WTC11 (cell line): ENCODE measurements at regions of chr22 and their contacts with region 1.

Region 1: DNA sequence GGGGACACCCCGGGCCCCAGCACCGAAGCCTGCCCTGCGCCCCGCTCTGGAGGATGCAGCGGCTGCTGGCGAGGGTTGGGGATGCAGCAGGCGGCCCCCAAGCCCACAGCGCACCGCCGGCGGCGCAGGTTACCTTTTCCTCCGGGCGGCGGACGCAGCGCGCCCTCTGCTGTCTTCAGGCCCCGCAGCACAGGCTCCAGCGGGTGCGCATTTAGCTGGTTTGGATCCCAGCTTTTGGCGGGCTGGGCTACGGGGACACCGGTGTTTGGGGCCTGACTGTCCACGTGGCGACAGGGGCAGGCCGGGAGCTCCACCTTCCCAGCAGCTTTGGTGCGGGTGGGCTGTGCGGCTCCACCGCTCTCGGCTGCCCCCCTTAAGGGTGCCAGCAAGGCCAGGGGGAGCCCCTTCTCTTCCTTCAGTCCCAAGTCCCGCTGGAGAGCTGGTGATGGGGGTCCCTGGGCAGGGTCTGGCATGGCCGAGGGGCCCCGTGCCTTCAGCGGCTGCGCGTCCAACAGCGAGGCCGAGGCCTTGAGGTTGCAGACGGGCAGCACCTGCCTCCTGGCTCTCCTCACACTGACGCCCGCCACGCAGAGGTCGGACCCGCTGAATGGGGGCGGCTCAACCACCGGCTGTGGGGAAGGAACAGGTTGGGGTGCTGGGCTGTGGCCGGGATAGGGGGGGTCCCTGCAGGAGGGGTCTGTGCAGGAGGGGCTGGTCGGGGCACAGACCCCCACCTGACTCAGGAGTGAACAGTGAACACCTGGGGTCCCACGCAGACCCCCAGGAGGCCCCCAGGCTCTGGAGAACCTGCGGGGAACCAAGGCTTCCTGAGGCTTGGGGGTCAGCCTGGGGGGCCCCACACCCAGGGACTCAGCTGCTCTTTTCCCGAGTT is 18.0 kb upstream of the IL17REL start:
- DNase-seq: peak; percentile 93
- ATAC-seq: peak; percentile 93
- H3K4me3 Mint-ChIP-seq: no peak overlapping the region
- H3K27ac Mint-ChIP-seq: no peak overlapping the region
- H3K4me1 Mint-ChIP-seq: no peaks in the 10 kb centered on the region
- H3K27me3 Mint-ChIP-seq: peaks cover 20% of the 10 kb centered on the region
- CTCF ChIP-seq: peak; percentile 63; the same call in 1 of the 2 replicates

Region 2: GRCh38 chr22:49767355-49768062 is 263.0 kb before region 1 on chr22:
- CTCF ChIA-PET with region 1: interaction called, 29 read pairs
- POLR2A ChIA-PET with region 1: no interaction called
- DNase-seq: peak; percentile 66
- ATAC-seq: peak; percentile 60
- H3K4me3 Mint-ChIP-seq: no peak overlapping the region
- H3K27ac Mint-ChIP-seq: no peak overlapping the region
- H3K4me1 Mint-ChIP-seq: peaks cover 6% of the 10 kb centered on the region; the same call in 1 of the 2 replicates
- H3K27me3 Mint-ChIP-seq: no peaks in the 10 kb centered on the region
- CTCF ChIP-seq: peak; percentile 64

Region 3: DNA sequence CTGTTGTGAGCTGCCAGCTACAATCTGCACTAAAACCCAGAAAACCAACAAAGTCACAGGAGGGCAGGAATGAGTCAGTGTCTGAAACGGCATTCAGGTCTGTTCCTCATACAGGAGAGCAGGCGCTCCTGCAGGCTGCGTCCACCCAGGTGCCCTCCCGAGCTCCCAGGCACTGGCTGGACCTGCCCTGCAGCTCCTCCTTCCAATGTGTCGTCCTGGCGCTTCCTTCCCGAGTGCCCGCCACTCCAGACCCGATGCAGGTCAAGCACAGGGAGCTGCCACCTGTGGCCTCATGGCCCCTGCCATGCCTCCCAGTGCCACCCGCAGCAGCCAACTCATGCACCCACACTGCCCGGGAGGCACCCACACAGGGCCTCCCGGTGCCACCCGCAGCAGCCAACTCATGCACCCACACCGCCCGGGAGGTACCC is 214.9 kb before region 1 on chr22:
- CTCF ChIA-PET with region 1: no interaction called
- POLR2A ChIA-PET with region 1: no interaction called
- DNase-seq: no peak
- ATAC-seq: no peak
- H3K4me3 Mint-ChIP-seq: no peak overlapping the region
- H3K27ac Mint-ChIP-seq: peak overlapping the region; percentile 36; the same call in 1 of the 2 replicates
- H3K4me1 Mint-ChIP-seq: no peaks in the 10 kb centered on the region
- H3K27me3 Mint-ChIP-seq: no peaks in the 10 kb centered on the region
- CTCF ChIP-seq: no peak

Region 4: GRCh38 chr22:49936018-49936952 is 94.3 kb before region 1 on chr22:
- CTCF ChIA-PET with region 1: interaction called, 75 read pairs
- POLR2A ChIA-PET with region 1: no interaction called
- DNase-seq: peak; percentile 82
- ATAC-seq: peak; percentile 71
- H3K4me3 Mint-ChIP-seq: peak overlapping the region; percentile 58
- H3K27ac Mint-ChIP-seq: no peak overlapping the region
- H3K4me1 Mint-ChIP-seq: peaks cover 4% of the 10 kb centered on the region
- H3K27me3 Mint-ChIP-seq: no peaks in the 10 kb centered on the region; the same call in 1 of the 2 replicates
- CTCF ChIP-seq: no peak

Region 5: DNA sequence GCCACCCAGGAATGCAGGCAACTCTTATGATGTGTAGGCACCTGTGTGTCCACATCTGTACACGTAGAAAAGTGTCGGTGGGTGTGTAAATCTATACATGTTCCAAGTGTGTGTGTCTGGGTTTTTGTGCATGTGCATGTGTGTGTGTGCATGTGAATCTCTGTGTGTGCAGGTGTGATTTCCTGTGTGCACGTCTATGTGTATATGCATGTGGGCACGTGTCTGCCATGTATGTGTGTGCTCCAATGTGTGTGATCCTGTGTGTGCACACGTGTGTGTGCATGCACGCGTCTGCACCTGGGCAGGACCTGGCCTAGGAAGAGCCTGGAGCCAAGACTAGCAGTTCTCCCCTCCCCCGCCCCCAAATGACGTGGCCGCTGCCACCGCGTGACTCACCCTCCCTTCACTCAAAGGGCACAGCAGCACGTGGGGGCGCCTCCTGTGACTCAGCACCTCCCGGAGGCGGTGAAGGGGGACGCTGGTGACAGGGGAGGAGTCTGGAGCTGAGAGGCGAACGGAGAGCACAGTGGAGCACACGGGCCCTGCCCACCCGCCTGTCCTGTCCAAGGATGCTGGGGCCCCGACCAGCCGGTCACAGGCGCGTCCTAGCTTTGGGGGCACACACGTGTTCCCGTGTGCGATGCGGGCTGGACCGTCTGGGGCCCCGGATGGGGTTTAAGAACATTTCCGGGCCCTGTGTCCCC is 59.9 kb before region 1 on chr22:
- CTCF ChIA-PET with region 1: interaction called, 16 read pairs
- POLR2A ChIA-PET with region 1: no interaction called
- DNase-seq: peak; percentile 64
- ATAC-seq: peak; percentile 73
- H3K4me3 Mint-ChIP-seq: peak overlapping the region; percentile 61
- H3K27ac Mint-ChIP-seq: peak overlapping the region; percentile 57; the same call in 1 of the 2 replicates
- H3K4me1 Mint-ChIP-seq: peaks cover 6% of the 10 kb centered on the region
- H3K27me3 Mint-ChIP-seq: peaks cover 8% of the 10 kb centered on the region
- CTCF ChIP-seq: no peak

Region 6: DNA sequence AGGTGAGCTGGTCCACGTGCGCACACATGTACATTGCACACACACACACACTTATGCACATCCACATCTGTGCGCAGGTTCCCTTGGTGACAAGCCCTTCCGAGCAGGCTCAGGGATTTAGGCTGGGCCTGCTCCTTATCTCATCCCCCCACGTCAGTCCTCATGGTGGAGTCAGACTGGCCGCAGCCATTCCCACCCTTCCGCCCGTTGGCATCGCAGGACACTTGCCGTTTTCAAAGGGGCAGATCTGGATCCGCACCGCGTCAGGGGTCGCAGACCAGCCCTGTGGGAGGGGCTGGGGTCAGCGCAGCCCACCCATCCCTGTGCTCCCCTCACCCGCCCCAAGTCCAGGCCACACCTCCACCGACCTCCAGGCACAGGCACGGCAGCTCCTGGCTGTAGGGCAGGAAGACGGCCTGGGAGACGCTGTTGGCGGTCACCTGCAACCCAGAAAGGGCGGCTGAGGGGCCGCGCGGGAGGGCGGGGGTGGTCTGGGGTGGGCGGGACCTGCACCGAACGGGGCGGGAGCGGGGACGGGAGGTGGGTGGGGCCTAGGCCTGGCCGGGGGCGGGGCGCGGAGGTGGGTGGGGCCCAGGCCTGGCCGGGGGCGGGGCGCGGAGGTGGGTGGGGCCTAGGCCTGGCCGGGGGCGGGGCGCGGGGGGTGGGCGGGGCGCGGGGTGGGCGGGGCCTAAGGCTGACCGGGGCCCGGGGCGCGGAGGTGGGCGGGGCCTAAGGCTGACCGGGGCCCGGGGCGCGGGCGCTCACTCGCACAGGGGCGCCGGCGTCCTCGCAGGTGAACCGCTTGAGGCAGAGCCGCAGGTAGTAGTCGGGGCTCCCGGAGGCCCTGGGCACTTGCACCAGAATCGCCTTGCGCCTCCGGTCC is 31.2 kb before region 1 on chr22:
- CTCF ChIA-PET with region 1: interaction called, 50 read pairs
- POLR2A ChIA-PET with region 1: interaction called, 4 read pairs
- DNase-seq: peak; percentile 74
- ATAC-seq: peak; percentile 82
- H3K4me3 Mint-ChIP-seq: peak overlapping the region; percentile 70
- H3K27ac Mint-ChIP-seq: peak overlapping the region; percentile 80; the same call in 1 of the 2 replicates
- H3K4me1 Mint-ChIP-seq: peaks cover 9% of the 10 kb centered on the region
- H3K27me3 Mint-ChIP-seq: peaks cover 25% of the 10 kb centered on the region
- CTCF ChIP-seq: no peak

Region 7: DNA sequence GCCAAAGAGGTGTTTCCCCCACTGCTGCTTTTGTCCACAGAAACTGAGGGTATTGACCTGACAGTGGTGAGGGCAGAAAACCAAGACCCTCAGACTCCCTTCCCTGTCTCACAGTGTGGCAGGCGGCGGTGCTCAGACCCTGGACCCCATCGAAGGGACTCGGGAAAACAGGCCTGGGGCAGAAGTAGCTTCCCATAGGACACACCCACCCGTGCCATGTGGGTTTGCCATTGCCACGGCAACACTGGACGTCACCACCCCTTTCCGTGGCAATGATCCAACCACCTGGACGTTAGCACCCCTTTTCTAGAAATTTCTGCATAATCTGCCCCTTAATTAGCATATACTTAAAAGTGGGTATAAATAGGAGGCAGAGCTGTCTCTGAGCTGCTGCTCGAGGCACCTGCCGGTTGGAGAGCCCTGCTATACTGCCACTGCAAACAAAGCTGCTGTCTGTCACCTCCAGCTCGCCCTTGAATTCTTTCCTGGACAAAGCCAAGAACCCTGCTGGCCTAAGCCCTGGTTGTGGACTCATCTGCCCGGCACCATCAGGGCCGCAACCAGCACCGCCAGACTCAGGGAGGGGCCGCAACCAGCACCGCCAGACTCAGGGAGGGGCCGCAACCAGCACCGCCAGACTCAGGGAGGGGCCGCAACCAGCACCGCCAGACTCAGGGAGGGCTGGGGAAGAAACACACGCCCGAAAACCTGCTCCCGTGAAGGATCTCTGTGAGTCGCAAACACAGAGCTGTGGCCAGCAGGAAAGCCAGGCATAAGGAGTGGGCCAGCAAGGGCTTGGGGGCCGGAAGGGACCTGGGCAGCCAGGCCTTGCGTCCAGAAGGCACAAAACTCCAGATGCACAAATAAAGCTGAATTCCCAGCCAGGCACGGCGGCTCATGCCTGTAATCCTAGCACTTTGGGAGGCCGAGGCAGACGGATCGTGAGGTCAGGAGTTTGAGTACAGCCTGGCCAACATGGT is 44.3 kb after region 1 on chr22:
- CTCF ChIA-PET with region 1: interaction called, 10 read pairs
- POLR2A ChIA-PET with region 1: no interaction called
- DNase-seq: no peak
- ATAC-seq: peak; percentile 31; the same call in 1 of the 2 replicates
- H3K4me3 Mint-ChIP-seq: no peak overlapping the region
- H3K27ac Mint-ChIP-seq: no peak overlapping the region
- H3K4me1 Mint-ChIP-seq: no peaks in the 10 kb centered on the region
- H3K27me3 Mint-ChIP-seq: no peaks in the 10 kb centered on the region
- CTCF ChIP-seq: no peak

Region 8: DNA sequence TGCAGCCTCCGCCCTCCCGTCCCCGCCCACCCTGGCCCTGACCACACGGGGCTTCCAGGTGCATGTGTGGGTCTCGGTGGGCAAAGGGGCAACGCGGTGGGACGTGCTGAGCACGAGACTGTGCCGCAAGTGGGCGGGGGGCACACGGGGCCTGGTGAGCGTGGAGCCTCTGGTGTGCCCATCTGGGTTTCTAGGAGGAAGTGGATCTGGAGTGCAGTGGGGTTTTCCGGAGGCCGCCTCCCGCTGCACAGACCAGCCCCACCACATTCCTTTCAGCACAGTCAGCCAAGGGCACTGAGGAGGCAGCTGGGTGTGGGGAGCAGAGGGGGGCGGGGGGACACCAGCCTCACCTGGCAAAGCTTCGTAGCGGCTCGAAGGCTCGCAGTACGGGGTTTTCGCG is 251.8 kb after region 1 on chr22:
- CTCF ChIA-PET with region 1: no interaction called
- POLR2A ChIA-PET with region 1: no interaction called
- DNase-seq: no peak
- ATAC-seq: no peak
- H3K4me3 Mint-ChIP-seq: no peak overlapping the region
- H3K27ac Mint-ChIP-seq: no peak overlapping the region
- H3K4me1 Mint-ChIP-seq: no peaks in the 10 kb centered on the region
- H3K27me3 Mint-ChIP-seq: no peaks in the 10 kb centered on the region
- CTCF ChIP-seq: no peak